ENCODE measurements at regions of chr19 and their contacts with region 1.

Region 1: DNA sequence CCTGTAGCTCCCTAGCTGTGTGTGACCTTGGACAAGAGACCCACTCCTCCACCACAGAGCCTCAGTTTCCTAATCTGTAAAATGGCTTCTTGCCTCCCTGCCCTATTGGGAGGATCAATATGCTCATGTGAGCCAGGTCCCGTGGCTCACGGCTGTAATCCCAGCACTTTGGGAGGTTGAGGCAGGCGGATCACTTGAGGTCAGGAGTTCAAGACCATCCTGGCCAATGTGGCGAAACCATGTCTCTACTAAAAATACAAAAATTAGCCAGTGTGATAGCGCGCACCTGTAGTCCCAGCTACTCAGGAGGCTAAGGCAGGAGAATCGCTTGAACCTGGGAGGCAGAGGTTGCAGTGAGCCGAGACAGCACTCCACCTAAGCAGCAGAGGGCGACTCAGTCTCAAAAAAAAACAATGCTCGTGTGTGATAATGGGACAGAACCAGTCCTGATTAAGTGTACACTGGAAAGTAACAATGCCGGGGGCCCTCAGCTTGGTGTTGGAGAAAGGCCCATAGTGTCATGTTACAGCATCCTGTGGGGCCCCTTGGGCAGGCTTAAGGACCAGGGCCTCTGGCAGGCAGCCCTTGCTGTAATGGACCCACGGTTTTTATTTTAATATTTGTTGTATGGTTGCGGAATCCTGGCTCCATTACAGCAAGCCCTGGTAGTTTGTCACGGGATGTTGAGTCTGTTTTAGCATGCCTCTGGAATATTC is 6.8 kb downstream of the RPS11 start:
- DNase-seq: peak in 23 of 35 experiments; percentile 29 to 79 (median 48)
- ATAC-seq: no peak
- H3K4me3 ChIP-seq: no peak overlapping the region
- H3K4me3 Mint-ChIP-seq: peak overlapping the region in 1 of 3 donors; percentile 39
- H3K27ac ChIP-seq: peak overlapping the region; percentile 92
- H3K27ac Mint-ChIP-seq: peak overlapping the region; percentile 75 to 93
- H3K4me1 ChIP-seq: peaks cover 16 to 60% of the 10 kb centered on the region in 2 experiments
- H3K4me1 Mint-ChIP-seq: peaks cover 43 to 63% (median 50%) of the 10 kb centered on the region in 3 donors
- H3K27me3 ChIP-seq: no peaks in the 10 kb centered on the region
- H3K27me3 Mint-ChIP-seq: no peaks in the 10 kb centered on the region

Region 2: GRCh38 chr19:49570138-49570856 is 67.3 kb after region 1 on chr19:
- CTCF ChIA-PET with region 1: interaction called, 6 to 32 read pairs
- POLR2A ChIA-PET with region 1: interaction called in 1 of 2 experiments, 3 read pairs
- DNase-seq: peak in 32 of 35 experiments; percentile 51 to 95 (median 72)
- ATAC-seq: peak; percentile 10 to 46 (median 22)
- H3K4me3 ChIP-seq: no peak overlapping the region
- H3K4me3 Mint-ChIP-seq: peak overlapping the region in 1 of 3 donors; percentile 77
- H3K27ac ChIP-seq: peak overlapping the region; percentile 79
- H3K27ac Mint-ChIP-seq: peak overlapping the region; percentile 87
- H3K4me1 ChIP-seq: peaks cover 36 to 67% of the 10 kb centered on the region in 2 experiments
- H3K4me1 Mint-ChIP-seq: peaks cover 60 to 66% (median 60%) of the 10 kb centered on the region in 3 donors
- H3K27me3 ChIP-seq: no peaks in the 10 kb centered on the region
- H3K27me3 Mint-ChIP-seq: no peaks in the 10 kb centered on the region

Region 3: GRCh38 chr19:49580264-49581006 is 77.4 kb after region 1 on chr19 and contains the start of gene NOSIP:
- CTCF ChIA-PET with region 1: interaction called, 5 to 9 read pairs
- POLR2A ChIA-PET with region 1: interaction called in 1 of 2 experiments, 14 read pairs
- DNase-seq: peak; percentile 90 to 98 (median 95)
- ATAC-seq: peak; percentile 97 to 99 (median 98)
- H3K4me3 ChIP-seq: peak within 1 kb of the TSS; percentile 64 to 97
- H3K4me3 Mint-ChIP-seq: peak within 1 kb of the TSS; percentile 85 to 96 (median 91)
- H3K27ac ChIP-seq: peak within 1 kb of the TSS; percentile 38
- H3K27ac Mint-ChIP-seq: peak within 1 kb of the TSS; percentile 90 to 95
- H3K4me1 ChIP-seq: peaks cover 15 to 23% of the 10 kb centered on the region in 2 experiments
- H3K4me1 Mint-ChIP-seq: peaks cover 36 to 38% (median 37%) of the 10 kb centered on the region in 3 donors
- H3K27me3 ChIP-seq: no peaks in the 10 kb centered on the region
- H3K27me3 Mint-ChIP-seq: no peaks in the 10 kb centered on the region
- total RNA-seq, gene NOSIP: 152 to 297 (median 176) TPM